HCT116 (cell line): ENCODE measurements at regions of chr1 and their contacts with region 1.

Region 1: GRCh38 chr1:156608036-156608674 is 6.9 kb upstream of the GPATCH4 start:
- DNase-seq: peak; percentile 66
- ATAC-seq: peak; percentile 95
- H3K4me3 ChIP-seq: no peak overlapping the region
- H3K27ac ChIP-seq: no peak overlapping the region
- H3K4me1 ChIP-seq: peaks cover under 1 to 17% of the 10 kb centered on the region in 2 experiments; a peak in 3 of 4 replicates
- H3K27me3 ChIP-seq: no peaks in the 10 kb centered on the region
- CTCF ChIP-seq: peak; percentile 79 to 95 (median 80)
- POLR2A ChIP-seq: no peak
- RAD21 ChIP-seq: peak; percentile 88

Region 2: GRCh38 chr1:156583821-156584622 is 24.1 kb before region 1 on chr1:
- CTCF ChIA-PET with region 1: interaction called, 19 read pairs
- POLR2A ChIA-PET with region 1: no interaction called
- RAD21 ChIA-PET with region 1: interaction called in 1 of 2 experiments, 3 read pairs
- intact Hi-C with region 1: loop called (anchors 1 kb)
- DNase-seq: peak; percentile 83
- ATAC-seq: peak; percentile 61
- H3K4me3 ChIP-seq: no peak overlapping the region
- H3K27ac ChIP-seq: no peak overlapping the region
- H3K4me1 ChIP-seq: peaks cover 11 to 28% of the 10 kb centered on the region in 2 experiments
- H3K27me3 ChIP-seq: no peaks in the 10 kb centered on the region
- CTCF ChIP-seq: peak; percentile 84 to 94 (median 91)
- POLR2A ChIP-seq: no peak
- RAD21 ChIP-seq: peak; percentile 88

Region 3: GRCh38 chr1:156591432-156592157 is 16.6 kb before region 1 on chr1 and contains the start of gene NAXE:
- CTCF ChIA-PET with region 1: interaction called, 19 read pairs
- POLR2A ChIA-PET with region 1: no interaction called
- RAD21 ChIA-PET with region 1: interaction called in 1 of 2 experiments, 3 read pairs
- intact Hi-C with region 1: no loop called
- DNase-seq: no peak
- ATAC-seq: peak; percentile 88
- H3K4me3 ChIP-seq: peak within 1 kb of the TSS; percentile 60 to 95
- H3K27ac ChIP-seq: peak within 1 kb of the TSS; percentile 89
- H3K4me1 ChIP-seq: peaks cover 6 to 30% of the 10 kb centered on the region in 2 experiments; a peak in 3 of 4 replicates
- H3K27me3 ChIP-seq: no peaks in the 10 kb centered on the region
- CTCF ChIP-seq: no peak
- POLR2A ChIP-seq: peak; percentile 86
- RAD21 ChIP-seq: no peak
- total RNA-seq, gene NAXE: 139 TPM